Psoas muscle (tissue), 8 donors: ENCODE measurements at regions of chr9 and their contacts with region 1.

Region 1: DNA sequence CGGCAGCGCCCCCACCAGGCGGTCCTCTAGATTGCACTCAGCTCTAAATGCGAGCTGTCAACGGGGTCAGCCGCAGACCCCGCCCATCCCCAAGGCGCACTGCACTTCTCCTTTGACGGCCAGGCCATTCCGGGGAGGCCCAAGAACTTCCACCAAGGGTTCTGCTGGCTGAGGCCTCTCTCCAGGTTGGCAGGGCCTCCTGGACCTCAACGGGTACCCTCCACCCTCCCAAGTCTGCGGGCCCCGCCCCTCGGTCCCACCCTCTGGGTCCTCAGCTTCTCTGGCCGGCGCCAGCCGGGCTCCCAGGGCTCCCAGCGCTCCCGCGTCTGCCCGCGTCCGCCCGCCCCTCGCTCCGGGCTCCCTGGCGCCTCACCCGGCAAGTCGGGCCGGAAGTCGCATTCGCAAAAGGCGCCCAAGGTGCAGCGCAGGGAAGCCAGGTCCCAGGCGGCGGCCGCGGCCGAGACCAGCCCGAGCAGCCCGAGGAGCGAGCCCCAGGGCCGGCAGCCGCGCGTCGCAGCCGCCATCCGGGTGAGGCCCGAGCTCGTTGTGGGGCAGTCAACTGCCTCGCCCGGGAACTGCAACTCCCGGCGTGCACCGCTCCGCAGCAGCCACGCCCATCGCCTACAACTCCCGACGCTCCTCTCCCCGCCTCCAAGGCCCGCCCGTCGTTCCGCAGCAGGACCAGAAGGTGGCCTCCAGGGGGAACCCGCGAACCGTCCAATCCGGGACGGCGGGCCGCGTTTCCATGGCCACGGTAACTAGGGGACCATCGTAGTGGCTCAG is at the start of gene TOR2A:
- DNase-seq: peak; percentile 99
- ATAC-seq: peak; percentile 95 to 96 (median 95)
- H3K4me3 ChIP-seq: peak within 1 kb of the TSS; percentile 97
- H3K27ac ChIP-seq: peak within 1 kb of the TSS; percentile 99
- H3K4me1 ChIP-seq: peaks cover 13% of the 10 kb centered on the region
- H3K27me3 ChIP-seq: peaks cover 0 to 1% (median 0%) of the 10 kb centered on the region in 3 donors
- CTCF ChIP-seq: peak; percentile 97
- total RNA-seq, gene TOR2A: 2.8 to 6.7 (median 4.0) TPM

Region 2: GRCh38 chr9:127503947-127504782 is 230.8 kb before region 1 on chr9:
- intact Hi-C with region 1: loop called (anchors 5 kb)
- DNase-seq: peak; percentile 85 to 92
- ATAC-seq: peak; percentile 81 to 90 (median 85)
- H3K4me3 ChIP-seq: no peak overlapping the region
- H3K27ac ChIP-seq: no peak overlapping the region
- H3K4me1 ChIP-seq: no peaks in the 10 kb centered on the region
- H3K27me3 ChIP-seq: no peaks in the 10 kb centered on the region
- CTCF ChIP-seq: peak; percentile 82

Region 3: DNA sequence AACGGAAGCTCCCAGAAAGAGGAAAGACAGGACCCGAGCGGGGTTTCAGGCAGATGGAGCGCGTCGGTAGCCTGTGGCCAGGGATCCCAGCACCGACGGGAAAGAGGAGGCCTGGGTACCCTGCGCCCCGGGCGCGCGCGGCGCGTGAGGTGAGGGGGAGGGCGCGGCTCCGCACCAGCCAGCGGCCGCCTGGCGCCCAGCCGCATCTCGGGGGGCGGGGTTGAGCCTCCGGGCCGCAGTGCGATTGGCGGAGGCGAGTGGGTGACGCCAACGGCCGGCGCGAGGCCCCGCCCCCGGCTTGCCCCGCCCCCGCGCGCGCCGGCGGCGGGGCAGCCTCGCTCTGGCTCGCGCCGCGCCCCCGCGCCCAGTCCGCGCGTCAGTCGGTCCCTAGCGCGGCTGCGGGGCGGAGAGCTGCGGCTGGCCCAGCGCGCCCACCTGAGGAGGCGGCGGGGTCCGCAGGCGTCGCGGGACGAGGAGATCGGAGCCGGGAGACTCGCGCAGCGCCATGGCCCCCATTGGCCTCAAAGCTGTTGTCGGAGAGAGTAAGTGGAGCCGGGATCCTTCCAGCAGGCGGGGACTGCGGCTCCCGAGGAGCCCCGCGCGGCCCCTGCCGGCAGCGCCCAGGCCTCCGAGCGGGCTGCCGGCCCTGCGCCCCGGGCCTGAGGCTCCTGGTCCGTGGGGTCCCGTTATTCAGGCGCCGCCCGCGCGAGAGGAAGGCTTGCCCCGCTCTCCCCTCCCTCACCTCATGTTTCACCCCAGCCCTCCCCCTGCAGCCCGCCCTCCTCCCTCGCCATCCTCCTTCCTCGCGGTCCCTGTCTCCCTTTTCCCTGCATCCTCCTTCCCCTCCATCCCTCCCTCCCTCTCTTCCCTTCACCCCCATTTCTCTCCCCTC is 122.8 kb before region 1 on chr9 and contains the start of gene STXBP1:
- intact Hi-C with region 1: loop called in 1 of 2 experiments (anchors 5 kb)
- DNase-seq: peak; percentile 91 to 93
- ATAC-seq: peak; percentile 88 to 92 (median 90)
- H3K4me3 ChIP-seq: peak within 1 kb of the TSS; percentile 95
- H3K27ac ChIP-seq: peak within 1 kb of the TSS; percentile 87
- H3K4me1 ChIP-seq: peaks cover 32% of the 10 kb centered on the region
- H3K27me3 ChIP-seq: no peaks in the 10 kb centered on the region
- CTCF ChIP-seq: no peak
- total RNA-seq, gene STXBP1: 6.1 to 12.3 (median 8.9) TPM

Region 4: GRCh38 chr9:127869310-127870152 is 134.6 kb after region 1 on chr9:
- intact Hi-C with region 1: loop called (anchors 5 kb)
- DNase-seq: peak; percentile 91 to 96
- ATAC-seq: peak; percentile 76 to 85 (median 79)
- H3K4me3 ChIP-seq: no peak overlapping the region
- H3K27ac ChIP-seq: no peak overlapping the region
- H3K4me1 ChIP-seq: peaks cover 30% of the 10 kb centered on the region
- H3K27me3 ChIP-seq: no peaks in the 10 kb centered on the region
- CTCF ChIP-seq: peak; percentile 78

Region 5: DNA sequence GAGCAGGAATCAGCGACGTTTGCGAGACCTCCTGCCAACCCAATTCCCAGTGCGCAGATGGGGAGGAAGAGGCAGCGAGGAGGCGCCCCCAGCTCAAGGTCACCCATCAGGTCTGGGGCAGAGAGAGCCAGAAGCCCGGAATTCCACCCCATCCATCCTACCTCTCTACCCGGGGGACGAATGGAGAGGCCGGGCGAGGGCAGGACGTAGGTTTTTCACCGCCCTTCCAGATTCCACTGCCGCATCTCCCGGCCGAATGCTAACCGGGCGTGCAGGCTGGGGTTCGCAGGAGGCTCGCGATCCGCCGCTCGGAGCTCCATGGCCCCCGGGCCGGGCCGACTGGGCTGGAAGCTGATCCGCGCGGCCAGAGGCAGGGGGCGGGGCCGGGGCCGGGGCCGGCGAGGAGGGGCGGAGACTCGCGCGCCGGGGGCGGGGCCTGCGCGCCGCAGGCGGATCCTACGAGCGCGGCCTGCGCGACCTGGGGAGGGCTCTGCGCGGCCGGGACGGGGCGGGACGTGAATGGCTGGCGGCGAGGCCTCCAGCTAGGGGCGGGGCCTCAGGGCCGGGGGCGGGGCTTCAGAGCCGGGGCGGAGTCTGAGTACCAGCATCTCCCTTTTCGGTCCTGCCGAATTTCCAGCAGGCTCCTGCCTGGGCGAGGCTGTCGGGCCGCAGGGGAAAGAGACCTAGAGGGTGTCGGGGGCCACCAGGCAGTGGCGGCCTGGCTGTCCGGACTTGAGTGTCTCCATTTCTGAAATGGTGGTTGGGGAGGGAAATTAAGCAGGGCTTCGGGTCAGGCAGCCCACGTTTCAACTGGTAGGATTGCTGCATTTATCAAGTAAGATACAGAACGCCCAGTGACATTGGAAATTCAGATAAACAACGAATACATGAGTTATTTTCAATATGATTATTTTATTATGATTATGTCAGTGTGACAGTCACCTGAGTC is 182.0 kb after region 1 on chr9 and contains the start of gene ST6GALNAC4:
- intact Hi-C with region 1: loop called (anchors 2 to 5 kb)
- DNase-seq: peak; percentile 95 to 97
- ATAC-seq: peak; percentile 91 to 92 (median 92)
- H3K4me3 ChIP-seq: peak within 1 kb of the TSS; percentile 73
- H3K27ac ChIP-seq: peak within 1 kb of the TSS; percentile 81
- H3K4me1 ChIP-seq: peaks cover 37% of the 10 kb centered on the region
- H3K27me3 ChIP-seq: no peaks in the 10 kb centered on the region
- CTCF ChIP-seq: no peak
- total RNA-seq, gene ST6GALNAC4: 8.9 to 52.6 (median 27.3) TPM